Lower lobe of right lung (tissue), 2 donors: ENCODE measurements at regions of chr4 and their contacts with region 1.

Region 1: GRCh38 chr4:173318648-173319211 is 15.4 kb downstream of the HMGB2 start:
- DNase-seq: no peak
- ATAC-seq: peak; percentile 29 to 46
- H3K4me3 ChIP-seq: no peak overlapping the region
- H3K27ac ChIP-seq: no peak overlapping the region
- H3K4me1 ChIP-seq: no peaks in the 10 kb centered on the region
- H3K27me3 ChIP-seq: no peaks in the 10 kb centered on the region
- CTCF ChIP-seq: peak; percentile 53

Region 2: GRCh38 chr4:173415885-173416653 is 97.3 kb after region 1 on chr4:
- intact Hi-C with region 1: loop called (anchors 5 kb)
- DNase-seq: peak; percentile 85
- ATAC-seq: peak; percentile 81 to 82
- H3K4me3 ChIP-seq: peak overlapping the region; percentile 10
- H3K27ac ChIP-seq: peak overlapping the region; percentile 63
- H3K4me1 ChIP-seq: peaks cover 4% of the 10 kb centered on the region
- H3K27me3 ChIP-seq: no peaks in the 10 kb centered on the region
- CTCF ChIP-seq: no peak

Region 3: DNA sequence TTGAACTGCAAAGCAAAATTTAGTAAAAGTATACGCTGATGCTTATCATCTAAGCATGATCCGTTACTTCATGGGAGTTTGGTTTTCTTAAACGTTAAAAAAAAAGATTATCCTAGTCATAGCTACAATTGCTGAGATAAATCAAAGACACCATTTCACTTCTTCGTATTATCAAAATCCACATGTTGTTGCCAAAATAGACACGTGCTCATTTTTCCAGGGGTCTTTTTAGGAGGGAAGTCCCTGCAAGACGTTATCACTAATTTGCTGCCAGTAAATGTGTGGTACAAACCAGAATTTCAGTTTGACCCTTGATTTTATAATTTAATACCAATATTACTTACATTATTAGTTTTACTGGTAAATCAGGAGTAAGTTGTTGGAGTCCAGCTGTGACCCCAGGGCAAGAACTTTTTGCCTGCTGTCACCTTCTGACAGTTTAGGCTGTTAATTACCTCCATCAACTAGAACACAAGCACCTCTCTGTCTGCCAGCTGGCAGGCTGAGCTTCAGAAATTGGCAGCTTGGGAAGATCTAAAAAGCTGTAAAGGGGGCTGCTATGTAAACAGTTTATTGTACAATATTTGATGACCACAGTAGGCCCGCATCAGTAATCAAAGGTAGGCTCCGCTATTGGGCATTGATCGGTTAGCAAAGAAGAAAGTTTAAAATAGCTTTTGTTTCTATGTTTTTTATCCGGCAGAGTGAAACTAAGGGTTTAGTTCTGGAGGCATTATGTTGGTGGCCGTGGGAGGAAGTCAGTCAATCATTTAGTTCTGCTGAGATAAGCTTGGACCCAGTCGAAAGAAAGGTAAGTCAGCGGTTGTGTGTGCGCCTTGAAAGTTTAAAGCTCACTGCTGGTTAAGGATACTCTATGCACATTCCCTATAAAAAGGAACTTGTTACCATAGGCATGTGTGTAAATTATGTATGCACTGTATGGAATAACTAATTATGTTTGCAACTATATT is 768.4 kb after region 1 on chr4:
- intact Hi-C with region 1: no loop called
- DNase-seq: no peak
- ATAC-seq: no peak
- H3K4me3 ChIP-seq: no peak overlapping the region
- H3K27ac ChIP-seq: no peak overlapping the region
- H3K4me1 ChIP-seq: no peaks in the 10 kb centered on the region
- H3K27me3 ChIP-seq: no peaks in the 10 kb centered on the region
- CTCF ChIP-seq: no peak

Region 4: DNA sequence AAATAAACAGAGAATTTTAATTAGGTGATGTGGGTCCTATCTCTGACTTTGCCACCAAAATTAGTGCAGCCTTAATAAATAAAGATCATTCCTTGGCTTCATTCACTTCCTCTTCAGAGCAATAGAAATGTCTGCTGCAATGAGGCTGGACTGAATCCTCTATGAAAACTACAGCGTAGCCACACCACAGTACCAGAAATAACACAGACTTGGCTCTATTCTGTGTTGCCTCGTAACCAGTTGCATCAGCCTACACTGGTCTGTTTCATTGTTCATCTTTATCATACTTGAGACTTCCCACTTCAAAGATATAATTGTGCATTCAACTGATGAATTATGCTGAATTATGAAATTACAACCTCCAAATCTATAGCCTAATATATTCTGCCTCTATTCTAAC is 1494.6 kb after region 1 on chr4:
- intact Hi-C with region 1: no loop called
- DNase-seq: no peak
- ATAC-seq: no peak
- H3K4me3 ChIP-seq: no peak overlapping the region
- H3K27ac ChIP-seq: no peak overlapping the region
- H3K4me1 ChIP-seq: no peaks in the 10 kb centered on the region
- H3K27me3 ChIP-seq: no peaks in the 10 kb centered on the region
- CTCF ChIP-seq: no peak